ENCODE measurements at regions of chr5 and their contacts with region 1.

Region 1: DNA sequence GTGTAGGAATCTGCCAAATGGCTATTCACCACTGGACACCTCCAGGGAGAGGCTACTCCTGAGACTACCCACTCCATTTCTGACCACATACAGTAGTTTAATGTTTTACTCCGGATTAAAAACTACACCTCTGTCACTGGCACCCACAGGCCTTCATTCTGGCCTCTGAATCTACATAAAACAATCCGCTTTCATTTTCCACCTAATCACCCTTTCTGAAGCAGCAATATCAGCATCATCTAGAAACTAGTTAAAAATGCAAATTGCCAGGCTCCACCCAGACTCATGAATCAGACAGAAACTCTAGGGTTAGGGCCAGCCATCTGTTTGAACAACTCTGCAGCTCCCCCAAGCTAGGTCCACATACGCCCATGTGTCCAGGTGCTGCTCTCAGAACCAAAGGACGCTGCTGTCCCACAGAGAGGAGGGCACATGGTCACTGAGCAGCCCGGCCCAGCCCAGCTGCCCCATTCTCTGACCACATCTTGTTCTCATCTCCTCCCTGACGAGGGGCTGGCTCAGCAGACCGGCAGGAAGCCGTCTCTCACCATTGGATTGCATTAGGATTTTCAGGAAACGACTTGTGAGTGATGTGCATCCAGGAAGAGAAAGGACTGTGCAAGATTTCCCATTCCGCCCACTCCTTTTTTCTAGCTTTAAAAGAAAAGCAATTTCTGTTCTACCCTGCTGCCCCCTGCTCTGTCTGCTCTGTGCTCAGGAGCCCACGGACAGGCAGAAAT is 34.7 kb downstream of the ADAM19 start:
- DNase-seq: peak; percentile 92

Region 2: GRCh38 chr5:157459715-157460599 is 80.9 kb before region 1 on chr5 and contains the start of gene NIPAL4:
- intact Hi-C with region 1: loop called in 1 of 2 experiments (anchors 2 kb)
- DNase-seq: no peak
- total RNA-seq, gene NIPAL4: 0.37 to 0.52 TPM

Region 3: DNA sequence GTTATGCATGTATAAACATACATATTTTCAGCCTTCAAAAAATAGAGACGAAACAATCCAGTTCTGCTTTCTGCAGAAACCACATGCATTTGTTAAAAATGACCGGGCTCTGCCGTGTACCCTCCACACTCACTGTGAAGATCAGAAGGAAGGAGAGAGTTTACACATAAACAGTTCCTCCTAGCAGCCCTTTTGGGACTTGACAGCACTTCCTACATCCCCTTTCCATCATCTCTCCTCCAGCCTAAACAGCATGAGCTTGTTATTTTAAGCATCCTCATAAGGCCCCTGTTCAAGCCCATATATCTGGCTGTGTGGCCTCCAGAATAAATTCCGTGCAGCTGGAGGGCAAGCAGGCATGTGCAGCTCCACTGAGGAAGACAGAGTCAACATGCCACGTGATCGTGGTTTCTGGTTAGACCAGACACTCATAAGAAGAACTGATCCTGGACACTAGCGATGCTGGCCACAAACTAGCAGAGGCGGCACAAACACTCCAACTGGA is 38.7 kb before region 1 on chr5:
- intact Hi-C with region 1: no loop called
- DNase-seq: no peak

Measured in posterior vena cava (tissue), 2 donors.